GM18951 (cell line): ENCODE measurements at regions of chr17 and their contacts with region 1.

Region 1: GRCh38 chr17:60959696-60960095 is 282.0 kb downstream of the BCAS3 start:
- POLR2A ChIP-seq: no peak

Region 2: GRCh38 chr17:60926466-60927157 is 33.1 kb before region 1 on chr17:
- in situ Hi-C with region 1: no loop called
- POLR2A ChIP-seq: no peak

Region 3: DNA sequence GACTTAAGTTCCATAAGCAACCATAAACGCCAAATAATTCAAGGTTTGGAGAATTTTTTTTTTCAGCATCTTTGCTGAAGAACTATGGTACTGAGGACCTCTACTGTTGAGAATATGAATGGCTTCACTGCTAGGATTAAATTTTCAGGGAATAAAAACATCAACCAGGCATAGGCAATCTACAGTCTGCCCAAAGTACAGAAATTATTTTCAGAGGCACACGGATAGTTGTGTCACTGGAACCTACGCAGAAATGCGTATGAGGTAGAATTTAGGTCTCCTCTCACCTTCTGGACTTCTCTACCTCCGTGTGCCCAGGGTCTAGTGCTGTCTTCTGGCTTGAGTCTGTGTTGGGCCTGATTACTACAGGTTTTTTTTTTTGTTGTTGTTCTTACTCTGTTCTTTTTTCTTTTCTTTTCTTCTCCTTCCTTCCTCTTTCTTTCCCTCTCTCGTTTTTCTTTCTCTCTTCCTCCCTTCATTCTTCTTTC is 591.6 kb after region 1 on chr17:
- in situ Hi-C with region 1: loop called (anchors 10 kb)
- POLR2A ChIP-seq: no peak